Sigmoid colon (tissue), 7 donors: ENCODE measurements at regions of chr2 and their contacts with region 1.

Region 1: GRCh38 chr2:85678794-85679672 is 11.0 kb upstream of the SFTPB start:
- DNase-seq: peak; percentile 96
- H3K4me3 ChIP-seq: no peak overlapping the region
- H3K27ac ChIP-seq: peak overlapping the region in 1 of 4 donors; percentile 9
- H3K4me1 ChIP-seq: peaks cover 0 to 12% (median 8%) of the 10 kb centered on the region in 4 donors
- H3K27me3 ChIP-seq: no peaks in the 10 kb centered on the region
- CTCF ChIP-seq: peak; percentile 72 to 98 (median 92)
- EP300 ChIP-seq: no peak
- POLR2A ChIP-seq: no peak

Region 2: GRCh38 chr2:85707304-85707703 is 28.3 kb after region 1 on chr2:
- intact Hi-C with region 1: loop called (anchors 2 kb)
- DNase-seq: peak; percentile 82
- H3K4me3 ChIP-seq: no peak overlapping the region
- H3K27ac ChIP-seq: peak overlapping the region; percentile 36 to 72 (median 57)
- H3K4me1 ChIP-seq: peaks cover 0 to 9% (median 4%) of the 10 kb centered on the region in 4 donors
- H3K27me3 ChIP-seq: no peaks in the 10 kb centered on the region
- CTCF ChIP-seq: peak; percentile 69 to 81 (median 74)
- EP300 ChIP-seq: no peak
- POLR2A ChIP-seq: no peak